Right ventricle myocardium inferior (tissue), 1 donor: ENCODE measurements at regions of chr1 and their contacts with region 1.

Region 1: DNA sequence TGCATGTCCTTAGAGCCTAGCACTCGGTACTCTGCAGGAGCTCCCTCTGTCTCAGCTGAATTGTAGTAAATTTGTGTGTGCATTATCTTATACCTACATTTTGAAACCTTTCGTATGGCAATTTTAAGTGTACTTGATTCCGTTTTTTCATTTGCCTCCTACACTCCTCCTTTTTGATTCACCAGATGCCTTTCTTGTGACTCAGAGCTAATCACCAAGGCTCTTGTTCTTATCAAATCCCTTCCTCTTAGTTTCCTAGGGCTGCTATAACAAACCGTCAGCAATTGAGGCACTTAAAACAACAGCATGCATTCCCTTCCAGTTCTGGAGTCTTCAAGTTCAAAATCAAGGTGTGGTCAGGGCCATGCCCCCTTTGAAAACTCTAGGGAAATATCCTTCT is 261.0 kb downstream of the ASTN1 start:
- DNase-seq: no peak
- ATAC-seq: no peak

Region 2: GRCh38 chr1:177118901-177119300 is 215.4 kb after region 1 on chr1:
- intact Hi-C with region 1: no loop called
- DNase-seq: no peak
- ATAC-seq: no peak

Region 3: GRCh38 chr1:177355595-177355994 is 452.1 kb after region 1 on chr1:
- intact Hi-C with region 1: loop called (anchors 5 kb)
- DNase-seq: no peak
- ATAC-seq: no peak

Region 4: DNA sequence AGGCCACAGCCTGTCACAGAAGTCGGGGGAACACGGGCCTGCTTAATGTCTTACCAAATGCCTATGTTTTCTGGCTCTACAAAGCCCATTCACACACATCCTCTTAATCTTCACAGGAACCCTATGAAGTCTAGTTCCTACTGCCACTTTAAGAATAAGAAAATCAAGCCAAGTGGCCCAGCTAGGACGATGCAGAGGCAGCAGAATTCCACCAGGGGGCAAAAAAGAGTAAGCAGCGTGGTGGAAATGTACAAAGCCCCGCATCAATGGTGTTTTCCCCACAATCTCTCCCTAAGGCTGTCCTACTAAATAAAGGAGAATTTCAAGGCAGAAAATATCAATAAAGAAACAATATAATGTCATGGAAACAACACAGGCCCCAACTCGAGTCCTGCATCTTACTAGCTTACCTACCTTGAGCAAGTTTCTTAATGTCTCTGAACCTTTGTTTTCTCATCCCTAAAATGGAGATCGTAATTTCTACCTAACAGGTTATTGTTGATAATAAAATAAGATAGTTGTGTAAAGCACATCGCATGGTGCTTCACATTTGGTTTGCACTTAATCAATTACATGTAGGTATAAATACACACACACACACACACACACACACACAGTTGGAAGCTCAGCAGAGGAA is 1045.0 kb after region 1 on chr1:
- intact Hi-C with region 1: loop called (anchors 5 kb)
- DNase-seq: no peak
- ATAC-seq: peak; percentile 64